Endothelial cell of umbilical vein (primary cell): ENCODE measurements at regions of chr9 and their contacts with region 1.

Region 1: DNA sequence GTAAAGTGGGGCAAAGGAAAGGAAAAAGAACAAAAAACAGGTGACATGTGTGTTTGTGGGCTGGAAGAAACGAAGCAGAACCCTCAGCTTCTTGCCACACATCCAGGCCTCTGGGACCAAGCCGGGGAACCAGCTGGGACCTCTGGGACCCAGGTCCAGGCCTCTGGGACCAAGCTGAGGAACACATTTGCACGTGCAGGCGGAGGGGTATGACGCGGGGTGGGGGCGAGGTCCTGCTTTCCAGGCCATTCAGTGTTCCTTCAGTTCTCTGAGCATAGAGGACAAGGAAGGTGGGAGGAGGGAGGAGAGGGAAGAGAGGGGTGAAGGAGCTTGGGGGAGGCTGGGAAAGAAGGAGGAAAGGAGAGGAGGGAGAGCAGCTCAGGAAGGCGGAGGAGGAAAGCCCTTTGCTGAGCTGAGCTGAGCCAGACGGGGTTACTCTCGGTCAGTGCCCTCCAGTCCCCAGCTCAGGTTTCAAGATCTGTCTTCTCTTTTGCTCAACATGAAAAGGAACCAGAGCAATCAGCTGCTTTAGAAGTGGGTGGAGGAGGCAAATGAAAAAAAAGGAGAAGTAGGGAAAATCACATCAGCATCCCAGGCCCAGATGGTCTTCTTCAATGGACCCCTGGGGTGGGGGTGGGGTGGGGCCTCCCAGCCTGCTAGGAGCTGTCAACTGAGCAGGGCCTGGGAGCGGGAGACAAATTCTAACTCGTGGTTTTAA is 59.1 kb downstream of the ABCA1 start:
- DNase-seq: peak; percentile 86
- H3K4me3 ChIP-seq: no peak overlapping the region
- H3K27ac ChIP-seq: no peak overlapping the region
- H3K4me1 ChIP-seq: peaks cover 38% of the 10 kb centered on the region
- H3K27me3 ChIP-seq: no peaks in the 10 kb centered on the region
- CTCF ChIP-seq: no peak
- POLR2A ChIP-seq: no peak

Region 2: GRCh38 chr9:104009826-104010225 is 859.0 kb before region 1 on chr9:
- CTCF ChIA-PET with region 1: no interaction called
- POLR2A ChIA-PET with region 1: no interaction called
- dilution Hi-C with region 1: no loop called
- intact Hi-C with region 1: no loop called
- DNase-seq: no peak
- H3K4me3 ChIP-seq: no peak overlapping the region
- H3K27ac ChIP-seq: no peak overlapping the region
- H3K4me1 ChIP-seq: no peaks in the 10 kb centered on the region
- H3K27me3 ChIP-seq: no peaks in the 10 kb centered on the region
- CTCF ChIP-seq: no peak
- POLR2A ChIP-seq: no peak

Region 3: GRCh38 chr9:104850786-104851545 is 17.9 kb before region 1 on chr9:
- CTCF ChIA-PET with region 1: interaction called, 10 read pairs
- POLR2A ChIA-PET with region 1: no interaction called
- dilution Hi-C with region 1: no loop called
- intact Hi-C with region 1: loop called (anchors 2 kb)
- DNase-seq: peak; percentile 75
- H3K4me3 ChIP-seq: no peak overlapping the region
- H3K27ac ChIP-seq: no peak overlapping the region
- H3K4me1 ChIP-seq: peaks cover 17% of the 10 kb centered on the region
- H3K27me3 ChIP-seq: no peaks in the 10 kb centered on the region
- CTCF ChIP-seq: no peak
- POLR2A ChIP-seq: no peak

Region 4: DNA sequence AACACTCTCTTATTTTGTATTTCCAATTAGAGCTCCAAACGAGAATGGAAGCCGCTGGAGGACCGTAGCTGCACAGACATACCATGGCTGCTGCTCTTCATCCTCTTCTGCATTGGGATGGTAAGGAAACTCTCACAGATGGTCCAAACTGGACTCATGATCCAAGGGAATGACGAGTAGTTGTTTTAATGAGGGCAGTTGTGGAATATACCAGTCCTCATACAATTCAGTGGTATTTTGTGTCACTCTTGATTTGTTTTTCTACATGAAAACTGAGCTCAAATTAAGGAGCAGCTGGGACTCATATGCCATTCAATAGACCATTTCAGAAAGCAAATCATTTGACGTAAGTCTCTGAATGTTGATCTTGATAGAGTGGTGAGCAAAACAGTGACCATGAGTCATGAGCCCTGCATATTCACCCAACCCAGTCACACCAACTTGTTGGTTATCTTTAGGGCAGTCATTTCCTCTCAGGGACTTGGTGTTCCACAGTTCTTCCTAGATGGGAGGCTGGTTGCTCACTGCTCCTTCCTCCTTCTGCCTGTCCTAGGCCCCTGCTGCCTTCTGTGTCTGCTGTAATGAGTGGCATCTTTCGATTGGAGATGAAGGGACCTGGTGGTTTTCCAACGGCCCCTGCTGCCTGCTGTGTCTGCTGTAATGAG is 430.5 kb after region 1 on chr9:
- CTCF ChIA-PET with region 1: no interaction called
- POLR2A ChIA-PET with region 1: no interaction called
- dilution Hi-C with region 1: no loop called
- intact Hi-C with region 1: loop called (anchors 5 kb)
- DNase-seq: peak; percentile 98
- H3K4me3 ChIP-seq: no peak overlapping the region
- H3K27ac ChIP-seq: peak overlapping the region; percentile 96
- H3K4me1 ChIP-seq: peaks cover 45% of the 10 kb centered on the region
- H3K27me3 ChIP-seq: no peaks in the 10 kb centered on the region
- CTCF ChIP-seq: no peak
- POLR2A ChIP-seq: peak; percentile 69